Activated CD4-positive, alpha-beta T cell treated with anti-CD3 and anti-CD28 coated beads for 36 hours (primary cell): ENCODE measurements at regions of chr22 and their contacts with region 1.

Region 1: DNA sequence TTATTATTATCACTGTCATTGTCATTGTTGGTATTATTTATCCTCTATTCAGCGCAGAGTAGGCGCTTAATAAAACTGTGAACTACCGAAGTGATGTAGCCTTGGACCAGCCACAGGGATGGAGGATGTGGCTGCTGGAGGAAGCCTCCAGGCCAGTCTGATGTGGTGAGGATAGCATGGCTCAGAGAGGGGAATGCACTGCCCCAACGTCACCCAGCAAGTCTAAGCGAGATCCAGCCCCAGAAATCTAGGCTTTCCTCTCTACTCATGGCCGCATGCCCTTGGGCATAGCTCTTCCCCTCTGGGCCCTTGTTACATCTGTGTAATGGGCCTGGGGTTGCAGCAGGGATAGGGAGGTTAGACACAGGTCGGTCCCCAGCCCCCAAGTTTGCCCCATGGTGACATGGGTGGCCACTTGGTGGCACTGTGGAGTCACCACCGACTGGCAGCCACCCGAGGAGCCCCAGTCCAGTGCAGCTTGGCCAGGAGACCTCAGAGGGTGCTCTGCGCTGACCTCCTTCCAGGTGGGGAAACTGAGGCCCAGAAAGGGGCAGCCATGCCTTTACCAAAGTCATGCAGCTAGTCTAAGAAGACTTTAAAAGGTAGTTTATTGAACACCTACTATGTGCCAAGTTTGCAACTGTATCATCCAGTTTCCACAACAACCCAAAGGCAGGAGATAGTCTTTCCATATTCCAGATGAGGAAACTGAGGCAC is 395.7 kb downstream of the MN1 start:
- DNase-seq: peak; percentile 55
- ATAC-seq: no peak
- H3K4me3 Mint-ChIP-seq: no peak overlapping the region
- H3K27ac Mint-ChIP-seq: no peak overlapping the region
- H3K4me1 Mint-ChIP-seq: no peaks in the 10 kb centered on the region
- H3K27me3 Mint-ChIP-seq: peaks cover 18% of the 10 kb centered on the region

Region 2: DNA sequence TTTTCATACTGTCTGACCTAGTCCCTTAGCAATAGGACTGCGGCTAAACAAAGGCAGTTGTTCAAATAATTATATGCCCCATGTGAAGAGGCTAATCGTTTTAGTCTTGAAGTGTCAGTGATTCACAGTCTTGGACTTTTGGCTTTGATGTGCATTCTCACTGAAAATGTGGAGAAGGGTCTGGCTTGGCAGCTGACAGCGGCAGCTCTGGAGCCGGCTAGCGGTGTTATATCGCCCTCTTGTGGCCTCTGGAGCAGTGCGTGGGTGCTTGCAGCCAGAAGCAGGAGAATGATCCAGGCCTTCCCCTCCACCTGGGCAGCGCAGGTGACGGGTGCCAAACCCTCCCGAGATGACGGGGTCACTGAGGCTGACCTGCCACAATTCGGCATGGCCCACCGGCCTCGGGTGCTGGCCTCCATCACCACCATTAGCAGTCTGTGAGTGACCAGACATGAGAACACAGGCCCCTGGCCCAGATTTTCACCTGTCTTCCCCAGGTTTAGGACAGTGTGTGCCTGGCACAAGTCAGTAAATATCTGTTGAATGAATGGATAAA is 603.5 kb after region 1 on chr22:
- CTCF ChIA-PET with region 1: no interaction called
- POLR2A ChIA-PET with region 1: no interaction called
- intact Hi-C with region 1: loop called in 1 of 2 experiments (anchors 2 kb)
- DNase-seq: peak; percentile 88
- ATAC-seq: peak; percentile 85
- H3K4me3 Mint-ChIP-seq: no peak overlapping the region
- H3K27ac Mint-ChIP-seq: no peak overlapping the region
- H3K4me1 Mint-ChIP-seq: no peaks in the 10 kb centered on the region
- H3K27me3 Mint-ChIP-seq: no peaks in the 10 kb centered on the region